ENCODE measurements at regions of chr6 and their contacts with region 1.

Region 1: DNA sequence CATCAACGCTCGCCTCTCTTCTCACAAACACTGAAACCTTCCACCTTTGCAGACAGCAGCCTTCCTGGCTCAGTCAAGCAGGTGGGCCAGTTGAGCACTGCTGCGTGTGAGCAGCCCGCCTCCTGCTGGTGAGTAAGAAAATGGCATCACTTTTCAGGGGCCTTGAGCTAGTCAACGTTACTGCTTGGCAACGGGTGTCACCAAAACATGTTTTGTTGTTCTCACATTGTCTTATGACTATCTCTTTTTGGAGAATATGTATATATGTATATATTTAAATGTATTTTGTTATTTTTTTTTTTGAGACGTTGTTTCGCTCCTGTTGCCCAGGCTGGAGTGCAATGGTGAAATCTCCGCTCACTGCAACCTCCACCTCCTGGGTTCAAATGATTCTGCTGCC is 97.0 kb upstream of the AGPAT4 start:
- DNase-seq: peak; percentile 51 to 91 (median 79)

Region 2: DNA sequence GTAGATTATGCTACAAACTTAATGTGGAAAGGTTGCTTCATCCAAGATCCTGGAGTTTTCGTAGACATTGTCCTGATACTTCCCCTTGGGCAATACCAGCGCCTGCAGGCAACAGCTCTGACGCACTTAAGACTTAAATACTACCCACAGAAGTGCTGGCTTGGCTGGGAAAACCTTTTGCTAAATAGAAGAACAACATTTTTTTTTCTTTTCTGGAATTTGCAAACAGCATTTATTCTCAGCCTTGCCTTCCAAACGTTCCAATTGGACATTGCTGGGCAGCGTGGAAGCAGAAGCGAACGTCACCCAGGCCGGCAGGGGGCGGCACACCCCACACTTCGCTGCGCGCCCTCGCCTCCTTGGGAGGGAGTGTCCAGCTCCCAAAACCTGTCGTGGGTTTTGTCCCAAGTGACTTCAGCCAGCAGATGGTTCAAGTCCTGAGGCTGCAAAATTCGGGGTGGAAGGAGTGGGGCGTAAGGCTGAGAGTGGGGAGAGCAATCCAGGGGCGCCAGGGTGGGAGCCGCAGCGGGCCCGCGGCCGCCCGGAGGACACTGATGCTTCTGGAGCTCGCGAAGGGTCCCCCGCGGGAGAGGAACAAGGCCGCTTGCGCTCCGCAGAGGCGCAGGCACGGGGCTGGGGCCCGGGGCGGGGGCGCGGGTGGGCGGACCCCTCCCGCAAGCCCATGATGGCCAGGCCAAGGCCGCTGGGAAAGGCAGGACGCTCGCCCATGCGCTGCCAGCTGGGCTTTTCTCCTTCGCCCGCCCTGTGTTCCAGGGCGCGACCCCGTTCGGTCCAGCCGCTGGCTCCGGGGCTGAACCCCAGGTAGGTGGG is 440.1 kb before region 1 on chr6:
- intact Hi-C with region 1: loop called (anchors 5 kb)
- DNase-seq: peak; percentile 55 to 91 (median 84)

Region 3: GRCh38 chr6:161101517-161101916 is 269.4 kb before region 1 on chr6:
- intact Hi-C with region 1: loop called (anchors 5 kb)
- DNase-seq: peak in 35 of 42 donors; percentile 14 to 69 (median 38)

Region 4: DNA sequence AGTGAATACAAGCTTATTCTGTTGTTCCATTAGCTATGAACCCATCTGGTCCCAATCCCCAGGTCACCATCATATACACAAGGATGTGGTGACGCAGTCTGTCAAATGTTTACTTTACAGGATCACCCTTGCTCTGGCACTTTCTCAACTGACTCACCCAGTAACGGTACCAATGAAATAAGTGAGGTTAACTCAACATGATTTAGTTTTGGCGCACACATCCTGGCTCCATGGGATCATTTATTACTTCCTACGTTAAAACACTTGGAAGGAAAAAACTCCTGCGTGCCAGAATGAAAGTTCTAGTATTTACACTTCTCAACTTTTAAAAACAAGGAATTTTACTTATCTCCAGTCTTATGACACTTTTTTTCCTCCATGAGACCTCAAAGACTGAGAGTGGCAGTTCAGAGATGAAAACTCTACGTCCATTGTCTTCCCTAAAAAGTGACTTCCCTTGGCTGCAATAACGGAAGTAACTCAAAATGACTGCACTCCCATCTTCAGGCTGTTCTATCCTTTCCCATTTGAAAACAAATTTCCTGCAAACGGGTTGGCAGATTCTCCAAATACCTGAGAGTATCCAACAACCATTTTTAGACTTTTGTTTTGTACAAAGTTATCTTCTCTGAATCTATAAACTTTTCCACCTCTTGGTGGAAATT is 113.0 kb before region 1 on chr6:
- intact Hi-C with region 1: loop called (anchors 10 kb)
- DNase-seq: no peak

Region 5: DNA sequence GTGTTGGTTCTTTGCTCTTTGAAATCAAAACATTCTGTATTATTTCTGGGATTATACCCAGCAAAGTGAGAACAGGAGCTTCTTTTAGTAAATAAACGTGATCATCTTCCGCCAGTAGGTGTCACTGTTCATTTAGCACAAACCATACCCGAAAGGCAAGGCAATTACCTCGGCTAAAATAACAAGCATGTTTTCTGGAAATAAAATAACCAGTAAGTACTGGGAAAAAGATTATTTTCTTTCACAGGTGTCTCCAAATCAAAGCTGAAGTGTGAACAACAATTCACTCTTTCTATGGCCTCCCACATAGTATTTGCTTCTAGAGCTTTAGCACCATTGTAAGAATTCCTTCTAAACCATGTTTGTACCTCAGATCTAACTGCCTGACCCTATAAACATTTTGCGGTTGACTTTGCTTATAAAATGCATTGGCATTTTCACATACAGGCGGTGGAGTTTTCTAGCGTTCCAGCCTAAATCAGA is 47.6 kb after region 1 on chr6:
- intact Hi-C with region 1: no loop called
- DNase-seq: peak in 28 of 42 donors; percentile 1 to 90 (median 64)

Region 6: GRCh38 chr6:161660666-161661571 is 290.0 kb after region 1 on chr6:
- intact Hi-C with region 1: no loop called
- DNase-seq: no peak

Measured in head of caudate nucleus (tissue), 42 donors.